A549 (cell line): ENCODE measurements at regions of chr17 and their contacts with region 1.

Region 1: DNA sequence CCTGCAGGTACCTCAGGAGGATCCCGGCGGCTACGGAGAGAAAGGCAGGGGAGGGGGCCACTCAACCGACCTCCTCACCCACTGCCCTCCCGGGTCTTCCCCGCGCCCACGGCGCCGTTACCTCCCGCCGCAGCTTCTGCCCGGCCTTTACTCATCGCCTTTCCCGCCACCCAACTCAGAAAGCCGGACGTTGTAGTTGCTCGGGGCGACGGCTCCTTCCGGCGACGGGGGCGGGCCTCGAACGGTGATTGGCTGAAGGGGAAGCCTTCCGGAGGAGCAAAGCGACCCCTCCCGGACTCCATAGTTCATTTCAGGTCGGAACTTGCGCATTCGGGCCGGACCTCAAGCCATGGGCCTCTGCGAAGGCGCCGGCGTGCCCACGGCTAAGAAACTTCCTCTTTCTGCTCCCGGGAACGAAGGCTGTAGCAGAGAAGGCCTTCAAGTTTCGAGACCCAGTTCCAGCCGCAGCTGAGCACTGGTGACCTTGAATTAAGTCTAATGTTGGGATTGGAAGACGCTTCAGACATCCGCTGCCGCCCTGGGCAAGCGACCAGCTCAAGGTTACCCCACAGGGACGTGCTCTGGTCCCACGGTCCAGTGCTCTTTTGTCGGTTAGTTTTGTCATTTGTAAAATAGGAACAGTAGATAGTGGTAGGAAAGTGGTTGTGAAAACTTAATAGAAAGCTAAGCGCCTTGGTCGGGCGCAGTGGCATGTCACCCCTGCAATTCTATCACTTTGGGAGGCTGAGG is at the start of gene PSMC3IP:
- DNase-seq: peak; percentile 96 to 99
- ATAC-seq: peak; percentile 90 to 95
- H3K4me3 ChIP-seq: peak within 1 kb of the TSS; percentile 73
- H3K27ac ChIP-seq: peak within 1 kb of the TSS; percentile 87 to 94
- H3K4me1 ChIP-seq: peaks cover 20% of the 10 kb centered on the region; the same call in 2 of the 3 replicates
- CTCF ChIP-seq: peak; percentile 37
- EP300 ChIP-seq: no peak
- POLR2A ChIP-seq: peak; percentile 82
- RAD21 ChIP-seq: 0 out of 5 replicates have a peak, but pooled peaks of 1 of the 2 experiments have one; percentile 14
- polyA plus RNA-seq, gene PSMC3IP: 17.8 and 26.1 TPM in 2 replicates

Region 2: GRCh38 chr17:42554250-42555121 is 23.2 kb before region 1 on chr17:
- CTCF ChIA-PET with region 1: interaction called, 18 read pairs
- POLR2A ChIA-PET with region 1: interaction called, 4 read pairs
- DNase-seq: peak; percentile 82 to 88
- ATAC-seq: peak; percentile 81 to 89
- H3K4me3 ChIP-seq: peak overlapping the region; percentile 87
- H3K27ac ChIP-seq: peak overlapping the region; percentile 94
- H3K4me1 ChIP-seq: peaks cover 17% of the 10 kb centered on the region
- CTCF ChIP-seq: no peak
- EP300 ChIP-seq: no peak
- POLR2A ChIP-seq: peak; percentile 88
- RAD21 ChIP-seq: no peak

Region 3: DNA sequence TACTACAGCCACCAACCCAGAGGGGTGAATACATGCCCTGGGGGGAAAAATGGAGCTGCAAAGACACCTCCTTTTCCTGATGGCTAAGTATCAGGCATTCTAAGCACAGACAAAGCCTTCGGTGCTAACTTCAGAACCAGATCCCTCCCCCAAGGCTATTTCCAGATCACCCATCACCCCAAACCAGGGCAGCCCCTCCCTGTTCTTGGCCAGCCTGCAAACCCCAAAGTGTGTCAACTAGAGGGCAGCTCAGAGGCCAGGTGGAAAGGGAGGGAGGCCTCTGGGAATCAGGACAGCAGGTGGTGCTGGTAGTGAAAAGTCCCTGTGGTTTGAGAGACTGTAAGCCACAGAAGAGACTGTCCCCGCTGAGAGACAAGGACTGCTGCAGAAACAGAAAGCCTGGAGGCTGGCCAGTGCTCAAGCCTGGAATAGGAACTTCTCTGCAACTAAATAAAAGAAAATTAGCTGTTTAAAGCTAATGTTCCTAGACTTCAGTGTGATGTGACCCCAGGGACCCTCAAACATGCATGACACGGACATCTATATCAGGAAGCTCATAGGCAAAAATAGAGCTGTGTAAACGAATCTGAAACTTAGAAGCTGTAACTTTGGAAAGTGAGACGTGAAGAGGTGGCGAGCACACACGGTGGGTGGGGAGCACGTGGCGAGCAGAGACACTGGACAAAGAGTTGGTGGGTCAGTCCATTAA is 40.9 kb after region 1 on chr17:
- CTCF ChIA-PET with region 1: interaction called, 30 read pairs
- POLR2A ChIA-PET with region 1: no interaction called
- DNase-seq: peak; percentile 58 to 65
- ATAC-seq: peak; percentile 83 to 85
- H3K4me3 ChIP-seq: no peak overlapping the region
- H3K27ac ChIP-seq: no peak overlapping the region
- H3K4me1 ChIP-seq: peaks cover 16% of the 10 kb centered on the region
- CTCF ChIP-seq: peak; percentile 41
- EP300 ChIP-seq: no peak
- POLR2A ChIP-seq: no peak
- RAD21 ChIP-seq: peak; percentile 54 to 64

Region 4: DNA sequence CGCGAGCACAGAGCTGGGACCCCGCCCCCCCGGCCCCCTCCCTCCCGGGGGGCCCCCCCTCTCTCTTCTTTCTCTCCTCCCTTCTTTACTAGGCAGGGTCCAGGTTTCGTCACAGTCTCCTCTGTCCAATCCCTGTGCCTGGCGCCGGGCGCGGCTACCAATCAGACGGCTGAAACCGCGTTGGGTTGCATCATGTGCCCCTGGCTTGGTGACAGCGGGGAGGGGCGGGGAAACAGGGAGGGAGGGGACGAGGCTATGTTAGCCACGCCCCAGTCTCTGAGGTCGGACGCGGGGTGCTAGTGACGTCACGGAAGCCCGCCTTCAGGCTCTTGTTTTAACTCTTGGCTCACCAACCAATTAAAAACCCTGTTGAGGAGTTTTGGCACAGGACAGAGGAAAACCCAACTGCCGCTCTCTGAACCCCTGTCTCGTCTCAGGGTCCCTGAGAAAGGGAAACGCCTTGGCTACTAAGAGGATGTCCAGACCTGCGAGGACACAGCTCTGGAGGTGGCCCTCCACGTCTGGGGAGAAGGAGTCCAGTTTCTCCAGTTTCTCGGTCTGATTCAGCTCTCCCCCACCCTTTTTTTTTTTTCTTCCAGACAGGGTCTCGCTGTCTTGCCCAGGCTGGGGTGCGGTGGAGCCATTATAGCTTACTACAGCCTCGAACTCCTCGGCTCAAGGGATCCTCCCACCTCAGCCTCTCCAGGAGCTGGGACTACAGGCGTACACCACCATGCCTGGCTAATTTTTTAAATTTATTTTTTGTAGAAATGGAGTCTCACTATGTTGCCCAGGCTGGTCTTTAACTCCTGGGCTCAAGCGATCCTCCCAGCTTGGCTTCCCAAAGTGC is 99.5 kb after region 1 on chr17:
- CTCF ChIA-PET with region 1: interaction called, 394 read pairs
- POLR2A ChIA-PET with region 1: interaction called, 51 read pairs
- DNase-seq: peak; percentile 100
- ATAC-seq: peak; percentile 45 to 64
- H3K4me3 ChIP-seq: peak overlapping the region; percentile 87
- H3K27ac ChIP-seq: peak overlapping the region; percentile 95 to 98
- H3K4me1 ChIP-seq: peaks cover 56% of the 10 kb centered on the region
- CTCF ChIP-seq: no peak
- EP300 ChIP-seq: peak in 1 of 2 experiments; percentile 18; a peak in 1 of 5 replicates
- POLR2A ChIP-seq: no peak
- RAD21 ChIP-seq: no peak; a peak in 2 of 5 replicates

Region 5: DNA sequence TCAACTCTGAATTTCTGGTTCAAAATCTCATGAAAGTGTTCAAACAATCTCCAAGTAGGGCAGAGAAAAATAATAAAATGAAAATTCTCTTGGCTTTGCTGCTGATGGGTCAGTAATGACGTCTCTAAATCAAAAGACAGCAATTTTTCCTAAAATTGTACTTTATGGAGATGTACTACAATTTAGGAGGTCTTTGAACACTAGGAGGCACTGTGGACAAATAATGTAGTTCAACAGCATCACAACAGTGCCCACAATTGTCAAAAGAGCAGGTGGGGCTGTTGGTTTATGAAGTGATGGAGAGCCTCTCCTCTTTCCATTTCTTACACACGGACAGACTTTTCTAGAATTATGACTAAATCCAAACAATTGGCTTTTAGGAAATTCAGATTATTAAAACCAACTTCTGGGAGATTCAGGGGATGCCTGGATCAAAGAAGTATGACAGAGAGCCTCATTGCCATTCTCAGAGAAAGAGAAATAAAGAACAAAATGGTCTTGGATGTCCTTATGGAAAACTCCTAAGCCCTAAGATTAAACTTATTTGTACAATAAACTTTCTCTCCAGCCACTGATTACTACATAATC is 143.4 kb after region 1 on chr17:
- CTCF ChIA-PET with region 1: interaction called, 19 read pairs
- POLR2A ChIA-PET with region 1: no interaction called
- DNase-seq: peak; percentile 77 to 80
- ATAC-seq: peak; percentile 95 to 96
- H3K4me3 ChIP-seq: no peak overlapping the region
- H3K27ac ChIP-seq: no peak overlapping the region
- H3K4me1 ChIP-seq: no peaks in the 10 kb centered on the region
- CTCF ChIP-seq: peak; percentile 95
- EP300 ChIP-seq: no peak
- POLR2A ChIP-seq: no peak
- RAD21 ChIP-seq: peak; percentile 83 to 88

Region 6: DNA sequence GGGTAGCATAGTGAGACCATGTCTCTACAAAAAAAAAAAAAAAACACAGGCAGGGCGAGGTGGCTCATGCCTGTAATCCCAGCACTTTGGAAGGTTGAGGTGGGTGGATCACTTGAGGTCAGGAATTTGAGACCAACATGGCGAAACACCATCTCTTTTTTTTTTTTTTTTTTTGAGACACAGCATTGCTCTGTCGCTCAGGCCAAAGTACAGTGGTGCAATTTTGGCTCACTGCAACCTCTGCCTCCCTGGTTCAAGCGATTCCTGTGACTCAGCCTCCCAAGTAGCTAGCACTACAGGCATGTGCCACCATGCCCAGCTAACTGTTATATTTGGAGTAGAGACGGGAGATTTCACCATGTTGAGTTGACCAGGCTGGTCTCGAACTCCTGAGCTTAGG is 188.4 kb after region 1 on chr17:
- CTCF ChIA-PET with region 1: interaction called, 96 read pairs
- POLR2A ChIA-PET with region 1: interaction called, 16 read pairs
- DNase-seq: no peak
- ATAC-seq: no peak
- H3K4me3 ChIP-seq: no peak overlapping the region
- H3K27ac ChIP-seq: no peak overlapping the region
- H3K4me1 ChIP-seq: peaks cover 10% of the 10 kb centered on the region
- CTCF ChIP-seq: no peak
- EP300 ChIP-seq: no peak
- POLR2A ChIP-seq: no peak
- RAD21 ChIP-seq: no peak

Region 7: DNA sequence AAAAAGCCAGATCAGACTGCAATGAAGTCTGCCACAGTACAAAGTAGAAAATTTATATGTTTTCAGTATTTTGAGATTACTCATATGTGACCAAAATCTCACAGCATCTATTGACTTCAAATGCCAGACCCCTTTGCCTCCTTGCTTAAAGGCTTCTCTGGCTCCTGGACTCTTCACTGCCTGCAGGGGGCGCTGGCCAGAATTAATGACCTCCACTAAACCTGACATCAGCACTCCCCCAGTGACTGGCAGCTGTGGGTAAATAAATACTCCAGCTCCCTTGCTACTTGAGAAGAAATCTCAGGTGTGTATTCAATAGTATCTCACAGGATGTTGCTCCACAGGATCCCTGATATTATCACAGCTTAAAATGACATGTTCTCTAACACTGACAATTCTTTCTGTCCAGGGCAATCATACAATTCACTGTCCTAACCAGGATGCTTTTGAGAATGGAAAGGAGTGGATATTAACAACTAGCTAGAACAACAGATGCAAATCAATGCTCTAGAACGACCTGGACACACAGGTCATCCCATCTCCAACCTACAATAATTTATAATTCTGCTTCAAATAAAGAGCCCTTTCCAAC is 242.3 kb after region 1 on chr17:
- CTCF ChIA-PET with region 1: interaction called, 32 read pairs
- POLR2A ChIA-PET with region 1: interaction called, 5 read pairs
- DNase-seq: peak; percentile 84 to 85
- ATAC-seq: peak; percentile 44 to 66; a peak in 3 of 6 replicates
- H3K4me3 ChIP-seq: no peak overlapping the region
- H3K27ac ChIP-seq: no peak overlapping the region
- H3K4me1 ChIP-seq: peaks cover 21% of the 10 kb centered on the region
- CTCF ChIP-seq: peak; percentile 82
- EP300 ChIP-seq: no peak
- POLR2A ChIP-seq: no peak
- RAD21 ChIP-seq: peak; percentile 26 to 40; a peak in 2 of 5 replicates